ENCODE measurements at regions of chr15 and their contacts with region 1.

Region 1: DNA sequence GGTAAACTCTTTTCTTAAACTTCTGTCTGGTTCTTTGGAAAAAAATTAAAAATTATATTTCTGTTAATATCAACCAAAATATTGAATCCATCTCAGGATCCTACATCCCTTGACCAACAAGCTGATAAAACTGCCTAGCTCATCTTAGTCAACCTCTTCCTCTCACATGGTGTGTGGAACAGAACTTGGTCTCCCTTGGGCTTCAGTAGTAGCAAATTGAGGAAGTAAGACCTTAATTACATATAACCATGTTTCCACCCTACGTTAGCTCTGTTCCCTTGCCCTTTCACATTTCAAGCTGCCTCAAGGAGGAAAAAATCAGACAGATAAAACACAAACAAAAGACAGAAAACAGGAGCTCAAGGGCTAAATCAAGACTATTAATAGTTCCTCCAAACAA is 116.4 kb downstream of the GREM1 start:
- DNase-seq: no peak
- ATAC-seq: no peak
- H3K4me3 ChIP-seq: no peak overlapping the region
- H3K4me3 Mint-ChIP-seq: no peak overlapping the region
- H3K27ac ChIP-seq: no peak overlapping the region
- H3K27ac Mint-ChIP-seq: no peak overlapping the region
- H3K4me1 ChIP-seq: no peaks in the 10 kb centered on the region
- H3K4me1 Mint-ChIP-seq: no peaks in the 10 kb centered on the region
- H3K27me3 ChIP-seq: peaks cover 0 to 4% of the 10 kb centered on the region in 2 experiments
- H3K27me3 Mint-ChIP-seq: peaks cover 0 to 8% of the 10 kb centered on the region in 2 donors

Region 2: GRCh38 chr15:32738666-32739065 is 95.5 kb before region 1 on chr15:
- CTCF ChIA-PET with region 1: no interaction called
- POLR2A ChIA-PET with region 1: interaction called in 1 of 2 experiments, 12 read pairs
- DNase-seq: no peak
- ATAC-seq: no peak
- H3K4me3 ChIP-seq: no peak overlapping the region
- H3K4me3 Mint-ChIP-seq: no peak overlapping the region
- H3K27ac ChIP-seq: no peak overlapping the region
- H3K27ac Mint-ChIP-seq: no peak overlapping the region
- H3K4me1 ChIP-seq: no peaks in the 10 kb centered on the region
- H3K4me1 Mint-ChIP-seq: no peaks in the 10 kb centered on the region
- H3K27me3 ChIP-seq: no peaks in the 10 kb centered on the region
- H3K27me3 Mint-ChIP-seq: peaks cover 20 to 45% of the 10 kb centered on the region in 2 donors